GM10248 (cell line): ENCODE measurements at regions of chr11 and their contacts with region 1.

Region 1: DNA sequence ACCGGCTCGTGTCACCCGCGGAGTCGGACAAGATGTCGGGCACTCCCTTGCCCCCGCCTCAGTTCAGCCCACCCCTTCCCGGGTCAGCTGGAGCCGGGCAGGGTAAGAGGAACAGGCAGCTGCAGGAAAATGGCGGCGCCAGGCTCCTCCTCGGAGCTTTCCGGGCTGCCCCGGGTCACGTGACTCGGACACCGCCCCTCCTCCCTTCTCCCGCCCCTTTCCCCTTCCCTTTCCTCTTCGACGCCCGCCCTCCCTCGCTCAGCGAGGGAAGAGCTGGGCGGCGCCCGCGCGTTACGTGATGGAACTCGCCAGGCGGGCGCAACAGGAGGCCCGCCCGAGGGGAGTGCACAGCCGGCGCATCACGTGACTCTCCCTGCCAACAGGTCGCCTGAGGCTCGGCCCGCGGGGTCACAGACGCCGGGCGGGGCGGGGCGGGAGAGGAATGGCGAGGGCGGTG is at the start of gene PICALM:
- DNase-seq: peak; percentile 96
- CTCF ChIP-seq: no peak

Region 2: DNA sequence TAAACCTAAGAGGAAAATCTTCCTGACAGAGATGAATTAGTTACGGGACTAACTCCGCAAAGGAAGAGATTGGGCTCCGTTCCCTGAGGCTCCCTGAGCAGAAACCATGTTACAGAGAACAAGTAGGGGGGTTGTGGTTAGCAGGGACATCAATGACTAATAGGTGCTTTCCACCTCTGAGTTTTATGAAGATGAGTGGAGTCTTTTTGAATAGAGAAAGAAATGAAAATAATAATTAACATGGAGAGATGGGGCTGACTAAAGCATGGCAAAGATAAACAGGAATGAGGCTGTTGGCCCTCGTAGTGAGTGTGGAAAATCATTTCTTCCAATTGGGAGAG is 47.4 kb after region 1 on chr11:
- CTCF ChIA-PET with region 1: interaction called, 11 read pairs
- POLR2A ChIA-PET with region 1: no interaction called
- DNase-seq: peak; percentile 69
- CTCF ChIP-seq: no peak

Region 3: DNA sequence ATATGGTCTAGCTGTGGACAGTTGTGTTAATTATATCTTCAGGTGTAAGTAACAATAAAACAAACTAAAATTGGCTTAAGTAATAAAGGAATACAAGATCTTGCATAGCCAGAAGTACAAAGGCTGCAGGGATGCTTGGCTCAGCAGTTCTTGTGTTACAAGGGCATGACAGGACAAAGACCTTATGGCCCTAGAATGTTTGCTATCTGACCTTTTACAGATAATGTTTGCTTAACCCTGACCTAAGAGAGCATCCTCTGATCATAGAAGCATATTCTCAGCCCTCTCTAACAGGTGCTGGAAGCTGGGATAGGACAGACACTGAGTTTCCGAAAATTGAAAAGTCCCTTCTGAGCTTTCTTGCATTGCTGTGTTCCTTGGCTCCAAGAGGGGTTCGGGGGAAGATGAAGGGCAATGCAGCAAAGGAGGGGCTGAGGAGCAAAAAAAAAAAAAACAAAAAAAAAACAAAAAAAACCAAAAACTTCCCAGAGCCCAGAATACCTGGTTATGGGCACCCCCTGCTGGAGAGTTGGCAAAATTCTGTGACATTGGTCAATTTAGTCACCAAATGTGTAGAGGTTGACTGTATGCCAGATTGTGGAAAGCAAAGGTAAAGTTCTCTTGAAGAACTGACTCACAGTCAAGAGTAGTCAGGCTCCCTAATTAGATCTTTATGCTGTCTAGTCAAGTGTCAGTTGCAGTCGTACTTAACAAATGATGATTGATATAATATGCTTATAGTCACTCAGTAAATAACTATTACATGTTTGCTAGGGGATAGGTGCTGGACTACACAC is 222.7 kb after region 1 on chr11:
- CTCF ChIA-PET with region 1: interaction called, 10 read pairs
- POLR2A ChIA-PET with region 1: interaction called, 3 read pairs
- DNase-seq: peak; percentile 50
- CTCF ChIP-seq: peak; percentile 51